Caco-2 (cell line): ENCODE measurements at regions of chr11 and their contacts with region 1.

Region 1: GRCh38 chr11:27373856-27374602 is 11.0 kb upstream of the CCDC34 start:
- DNase-seq: peak in 1 of 2 experiments; percentile 51
- H3K4me3 ChIP-seq: no peak overlapping the region
- H3K4me3 Mint-ChIP-seq: peak overlapping the region; percentile 42
- H3K27ac Mint-ChIP-seq: peak overlapping the region; percentile 69
- H3K4me1 ChIP-seq: peaks cover 34% of the 10 kb centered on the region
- H3K4me1 Mint-ChIP-seq: peaks cover 39% of the 10 kb centered on the region
- H3K27me3 ChIP-seq: no peaks in the 10 kb centered on the region
- H3K27me3 Mint-ChIP-seq: no peaks in the 10 kb centered on the region
- CTCF ChIP-seq: no peak

Region 2: DNA sequence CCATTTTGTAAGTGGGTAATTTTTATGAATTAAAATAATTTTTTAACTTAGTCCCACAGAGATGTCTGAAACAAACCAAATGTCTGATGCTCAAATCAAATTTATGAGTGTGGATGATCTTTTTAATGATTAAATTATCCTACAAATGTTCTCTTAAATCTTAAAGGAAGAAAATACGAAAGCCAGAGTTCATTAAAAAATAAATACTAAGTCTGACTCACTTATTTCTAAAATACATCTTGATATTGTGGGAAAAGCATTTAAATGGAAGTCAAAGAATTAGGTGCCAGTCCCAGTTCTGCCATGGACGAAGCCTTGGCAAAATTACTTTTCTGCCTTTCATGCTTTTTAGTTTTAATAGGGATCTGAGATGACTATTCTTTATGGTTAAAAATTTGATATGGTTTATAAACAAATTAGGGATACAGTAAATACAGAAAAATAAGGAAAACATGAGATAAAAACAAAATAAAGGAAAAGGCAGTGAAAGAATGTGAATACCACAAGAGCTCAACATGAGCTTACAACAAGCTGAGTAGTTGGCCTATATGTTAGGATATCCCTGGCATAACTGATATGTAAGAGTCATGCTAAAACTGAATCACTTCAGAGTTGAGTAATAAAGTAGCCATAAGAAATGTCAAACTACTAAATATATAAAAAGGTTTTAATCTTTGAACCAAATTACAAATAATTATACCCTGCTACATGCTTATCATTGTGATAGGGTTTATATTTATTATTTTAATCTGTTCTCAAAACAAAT is 20.3 kb before region 1 on chr11:
- CTCF ChIA-PET with region 1: no interaction called
- POLR2A ChIA-PET with region 1: no interaction called
- intact Hi-C with region 1: loop called (anchors 1 kb)
- DNase-seq: no peak
- H3K4me3 ChIP-seq: no peak overlapping the region
- H3K4me3 Mint-ChIP-seq: no peak overlapping the region
- H3K27ac Mint-ChIP-seq: peak overlapping the region; percentile 14
- H3K4me1 ChIP-seq: peaks cover 42% of the 10 kb centered on the region
- H3K4me1 Mint-ChIP-seq: peaks cover 40% of the 10 kb centered on the region
- H3K27me3 ChIP-seq: no peaks in the 10 kb centered on the region
- H3K27me3 Mint-ChIP-seq: no peaks in the 10 kb centered on the region
- CTCF ChIP-seq: no peak

Region 3: GRCh38 chr11:27362749-27363575 is 11.1 kb before region 1 on chr11 and contains the start of gene CCDC34:
- CTCF ChIA-PET with region 1: interaction called, 3 read pairs
- POLR2A ChIA-PET with region 1: no interaction called
- intact Hi-C with region 1: loop called (anchors 1 kb)
- DNase-seq: peak; percentile 93 to 95
- H3K4me3 ChIP-seq: peak within 1 kb of the TSS; percentile 80
- H3K4me3 Mint-ChIP-seq: peak within 1 kb of the TSS; percentile 94
- H3K27ac Mint-ChIP-seq: peak within 1 kb of the TSS; percentile 91
- H3K4me1 ChIP-seq: peaks cover 13% of the 10 kb centered on the region
- H3K4me1 Mint-ChIP-seq: peaks cover 36% of the 10 kb centered on the region
- H3K27me3 ChIP-seq: no peaks in the 10 kb centered on the region
- H3K27me3 Mint-ChIP-seq: no peaks in the 10 kb centered on the region
- CTCF ChIP-seq: no peak
- total RNA-seq, gene CCDC34: 25.0 and 25.7 TPM in 2 replicates

Region 4: DNA sequence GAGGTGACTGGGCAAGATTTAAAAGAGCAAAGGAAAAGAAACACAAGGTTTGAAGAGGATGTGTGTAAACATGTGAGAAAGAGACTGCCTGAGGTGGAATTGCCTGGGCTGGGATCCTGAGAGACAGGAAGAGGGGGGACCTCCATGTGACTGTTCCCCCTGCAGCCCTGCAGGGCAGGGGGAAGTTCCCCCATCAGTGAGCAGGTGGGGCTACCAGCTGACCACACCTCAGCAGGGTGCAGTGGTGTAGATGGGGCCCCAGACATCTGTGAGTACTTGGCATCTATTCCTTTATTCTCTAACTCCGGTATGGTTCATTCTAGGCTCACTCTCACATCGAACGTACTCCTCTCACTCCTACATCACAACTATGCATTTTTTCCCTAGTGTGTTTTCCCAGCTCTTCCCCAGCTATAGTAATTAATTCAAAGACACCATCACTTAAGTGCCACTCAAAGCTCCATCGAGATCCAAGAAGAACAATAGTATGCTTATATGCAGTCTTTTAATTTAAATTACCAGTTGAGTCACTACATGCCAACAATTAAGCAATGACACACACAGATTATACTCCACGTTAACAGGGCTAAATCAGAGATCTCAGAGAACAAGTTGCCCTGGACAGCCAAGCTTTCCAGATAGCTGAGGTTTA is 55.9 kb after region 1 on chr11:
- CTCF ChIA-PET with region 1: no interaction called
- POLR2A ChIA-PET with region 1: no interaction called
- intact Hi-C with region 1: no loop called
- DNase-seq: no peak
- H3K4me3 ChIP-seq: no peak overlapping the region
- H3K4me3 Mint-ChIP-seq: no peak overlapping the region
- H3K27ac Mint-ChIP-seq: no peak overlapping the region
- H3K4me1 ChIP-seq: no peaks in the 10 kb centered on the region
- H3K4me1 Mint-ChIP-seq: no peaks in the 10 kb centered on the region
- H3K27me3 ChIP-seq: no peaks in the 10 kb centered on the region
- H3K27me3 Mint-ChIP-seq: no peaks in the 10 kb centered on the region
- CTCF ChIP-seq: no peak

Region 5: DNA sequence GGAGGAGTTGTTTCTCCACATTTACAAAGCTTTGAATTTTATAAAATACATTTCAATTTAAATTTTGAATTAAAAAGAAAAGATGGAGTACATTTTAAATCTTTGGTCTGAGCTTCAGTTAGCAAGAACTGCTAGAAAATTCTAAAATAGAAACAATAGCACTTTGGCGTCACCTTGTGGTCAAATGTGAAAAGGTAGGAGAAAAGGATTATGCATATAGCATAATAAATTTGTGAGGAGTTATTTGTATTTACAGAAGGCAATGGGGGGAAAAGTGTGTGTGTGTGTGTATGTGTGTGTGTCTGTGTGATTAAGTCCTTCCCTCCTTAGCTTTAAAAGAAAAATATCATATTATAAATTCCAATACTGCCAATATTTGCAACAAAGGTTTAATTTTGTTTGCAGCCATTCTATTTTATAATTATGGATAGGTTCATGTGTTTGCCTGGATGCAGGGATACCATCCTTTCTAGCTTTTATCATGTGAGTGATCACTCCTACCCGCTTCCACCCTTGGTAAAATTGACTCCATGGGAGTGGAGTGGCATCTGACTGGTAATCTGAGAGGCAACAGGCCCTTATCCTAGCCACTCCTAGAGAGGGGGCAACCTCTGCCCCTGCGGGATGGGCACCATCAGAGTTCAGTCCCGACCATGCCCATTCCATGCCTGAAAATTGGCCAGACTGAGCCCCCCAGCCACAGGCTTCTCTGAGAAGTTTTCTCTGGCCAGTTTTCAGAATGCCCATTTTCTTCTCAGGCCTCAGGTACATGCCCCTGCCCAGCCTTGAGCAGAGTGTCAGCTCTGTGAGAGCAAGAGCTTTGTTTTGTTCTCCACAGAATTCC is 112.1 kb after region 1 on chr11:
- CTCF ChIA-PET with region 1: no interaction called
- POLR2A ChIA-PET with region 1: no interaction called
- intact Hi-C with region 1: loop called (anchors 1 kb)
- DNase-seq: peak in 1 of 2 experiments; percentile 67
- H3K4me3 ChIP-seq: no peak overlapping the region
- H3K4me3 Mint-ChIP-seq: no peak overlapping the region
- H3K27ac Mint-ChIP-seq: no peak overlapping the region
- H3K4me1 ChIP-seq: no peaks in the 10 kb centered on the region
- H3K4me1 Mint-ChIP-seq: no peaks in the 10 kb centered on the region
- H3K27me3 ChIP-seq: no peaks in the 10 kb centered on the region
- H3K27me3 Mint-ChIP-seq: no peaks in the 10 kb centered on the region
- CTCF ChIP-seq: peak; percentile 87 to 92